ENCODE measurements at regions of chr15 and their contacts with region 1.

Region 1: DNA sequence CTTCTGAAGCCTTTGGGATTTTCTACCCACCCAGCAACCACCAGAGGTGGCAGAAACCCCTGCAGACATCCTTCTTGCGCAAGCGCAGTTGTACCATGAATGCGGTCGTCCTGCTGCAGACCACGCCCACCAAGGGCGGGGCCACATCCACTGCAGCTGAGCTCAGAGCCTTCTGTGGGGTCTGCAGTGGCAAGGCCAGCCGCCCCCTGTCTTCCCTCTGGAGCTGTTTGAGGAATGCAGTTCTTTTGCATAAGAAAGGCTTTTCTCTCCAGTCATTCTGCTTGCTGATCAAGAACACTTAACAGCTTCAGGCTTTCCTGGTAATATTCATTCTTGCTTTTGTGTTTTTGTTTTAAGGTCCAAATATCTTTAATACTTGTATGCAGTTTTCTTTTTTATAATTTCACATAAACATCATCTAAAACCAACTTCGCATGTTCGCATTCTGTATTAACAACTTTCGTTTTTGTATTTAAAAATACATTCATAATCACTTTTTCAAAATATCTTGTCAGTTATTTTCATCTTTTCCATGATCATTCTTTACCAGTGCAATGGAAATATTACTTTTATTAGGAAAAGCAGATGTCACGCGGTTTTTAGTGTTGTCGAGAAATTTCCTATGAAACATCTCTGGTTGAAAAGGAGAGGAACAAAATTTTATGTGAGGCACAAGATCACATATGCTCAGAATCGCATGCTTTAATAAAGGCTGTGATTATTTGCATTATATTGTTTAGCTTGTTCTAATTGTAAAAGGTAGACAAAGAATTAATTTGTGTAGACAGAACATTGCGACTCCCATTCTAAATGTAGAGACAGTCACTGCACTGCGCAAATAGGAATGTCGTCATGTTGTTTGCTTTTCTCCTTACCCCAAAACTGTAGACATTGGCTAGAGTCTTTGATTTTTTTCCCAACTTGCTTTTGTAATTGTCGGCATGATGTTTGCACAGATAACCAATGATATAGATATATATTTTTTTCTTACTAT is 98.1 kb upstream of the SNRPN start:
- DNase-seq: peak; percentile 72 to 84
- ATAC-seq: peak; percentile 57
- H3K4me3 ChIP-seq: peak overlapping the region; percentile 30 to 76
- H3K27ac ChIP-seq: no peak overlapping the region
- H3K4me1 ChIP-seq: no peaks in the 10 kb centered on the region
- H3K27me3 ChIP-seq: no peaks in the 10 kb centered on the region

Region 2: DNA sequence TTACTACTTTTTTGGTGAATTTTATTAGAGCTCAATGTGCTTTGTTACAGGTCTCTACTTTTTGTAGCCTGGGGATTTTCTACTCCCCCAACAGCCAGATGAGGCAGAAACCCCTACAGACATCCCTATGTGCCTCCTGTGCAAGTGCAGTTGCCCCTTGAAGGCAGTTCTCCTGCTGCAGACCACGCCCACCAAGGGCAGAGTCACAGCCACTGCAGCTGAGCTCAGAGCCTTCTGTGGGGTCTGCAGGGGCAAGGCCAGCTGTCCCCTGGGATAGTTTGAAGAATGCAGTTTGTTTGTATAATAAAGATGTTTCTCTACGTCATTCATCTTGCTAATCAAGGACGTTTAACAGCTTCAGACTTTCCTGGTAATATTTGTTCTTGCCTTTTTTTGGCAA is 104.3 kb before region 1 on chr15:
- intact Hi-C with region 1: no loop called
- DNase-seq: no peak
- ATAC-seq: no peak
- H3K4me3 ChIP-seq: no peak overlapping the region
- H3K27ac ChIP-seq: no peak overlapping the region
- H3K4me1 ChIP-seq: no peaks in the 10 kb centered on the region
- H3K27me3 ChIP-seq: no peaks in the 10 kb centered on the region

Region 3: DNA sequence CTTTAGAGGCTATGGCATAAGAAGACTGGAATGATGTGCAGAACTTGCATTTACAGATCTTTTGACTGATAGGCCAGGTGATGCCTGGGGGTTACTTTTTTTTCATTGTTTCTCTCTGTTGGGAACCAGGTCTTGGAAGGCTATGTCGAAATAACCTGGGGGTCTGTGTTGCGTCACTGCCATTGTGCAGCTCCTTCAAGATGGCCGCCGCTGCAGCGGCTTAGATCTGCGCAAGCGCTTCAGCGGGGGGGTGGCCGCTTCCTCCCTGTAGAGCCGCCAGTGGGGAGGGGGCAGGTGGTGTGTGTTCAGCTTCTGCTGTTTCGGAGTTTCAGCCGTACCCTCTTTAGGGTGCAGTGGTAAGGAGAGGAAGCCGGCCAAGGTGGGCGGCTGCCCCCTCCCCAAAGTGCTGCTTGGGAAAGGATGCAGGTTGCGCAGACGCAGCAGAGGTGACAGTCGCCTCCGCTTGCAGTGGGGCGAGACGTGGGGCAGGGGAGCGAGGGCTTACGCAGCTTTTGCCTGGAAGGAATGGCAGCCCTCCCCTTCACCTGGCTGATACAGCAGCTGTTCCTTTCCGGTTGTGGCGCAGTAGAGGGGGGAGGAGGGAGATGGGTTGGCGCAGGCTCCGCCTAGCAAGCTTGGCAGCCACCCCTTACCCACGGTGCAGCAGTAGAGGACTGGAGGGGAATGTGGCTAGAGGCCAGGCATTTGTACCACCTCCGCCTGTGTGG is 99.6 kb after region 1 on chr15:
- intact Hi-C with region 1: loop called (anchors 2 to 5 kb)
- DNase-seq: peak; percentile 82 to 85
- ATAC-seq: peak; percentile 91
- H3K4me3 ChIP-seq: peak overlapping the region; percentile 50 to 54
- H3K27ac ChIP-seq: peak overlapping the region in 1 of 2 donors; percentile 88
- H3K4me1 ChIP-seq: no peaks in the 10 kb centered on the region
- H3K27me3 ChIP-seq: no peaks in the 10 kb centered on the region